OCI-LY7 (cell line): ENCODE measurements at regions of chr11 and their contacts with region 1.

Region 1: DNA sequence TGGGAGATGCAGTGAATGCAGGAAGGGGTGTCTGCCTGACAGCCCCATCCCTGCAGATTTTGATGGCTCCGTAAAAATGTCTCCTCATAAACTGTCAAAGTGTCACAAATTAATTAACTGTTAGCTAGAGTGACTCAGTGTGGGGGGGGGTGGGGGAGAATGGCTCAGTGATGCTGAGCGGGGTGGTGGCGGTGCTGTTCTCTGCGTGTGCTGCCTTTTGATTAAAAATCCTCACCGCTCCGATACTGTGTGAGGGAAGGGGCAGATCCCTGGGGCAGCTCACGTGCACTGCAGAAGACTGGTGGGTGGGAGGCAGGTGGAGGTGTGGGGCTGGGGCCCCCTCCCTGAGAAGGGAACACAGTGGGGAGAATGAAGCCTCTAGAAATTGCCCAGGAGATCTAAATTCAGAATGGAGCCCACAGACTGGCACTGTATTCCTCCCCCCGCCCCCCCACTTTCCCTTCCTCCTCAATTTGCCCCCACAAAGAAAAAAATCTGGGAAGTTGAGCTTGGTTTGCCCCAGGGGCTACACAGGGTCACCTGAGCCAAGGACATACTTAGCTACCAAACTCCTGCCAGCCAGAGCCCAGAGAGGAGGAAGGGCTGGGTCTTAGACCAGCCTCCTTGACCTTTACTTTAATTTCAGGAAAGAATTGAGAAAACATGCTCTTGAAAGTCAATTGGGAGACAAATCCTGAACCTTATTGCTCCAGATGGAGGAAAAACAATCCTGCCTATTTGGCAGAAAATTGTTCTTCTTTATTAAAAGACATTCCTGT is 39.8 kb downstream of the DRD2 start:
- DNase-seq: no peak
- H3K4me3 ChIP-seq: no peak overlapping the region
- H3K27ac ChIP-seq: no peak overlapping the region
- H3K4me1 ChIP-seq: no peaks in the 10 kb centered on the region
- CTCF ChIP-seq: no peak

Region 2: GRCh38 chr11:113401716-113402115 is 33.7 kb before region 1 on chr11:
- CTCF ChIA-PET with region 1: interaction called, 12 read pairs
- POLR2A ChIA-PET with region 1: no interaction called
- intact Hi-C with region 1: no loop called
- DNase-seq: no peak
- H3K4me3 ChIP-seq: no peak overlapping the region
- H3K27ac ChIP-seq: no peak overlapping the region
- H3K4me1 ChIP-seq: no peaks in the 10 kb centered on the region
- CTCF ChIP-seq: no peak